ENCODE measurements at regions of chr13 and their contacts with region 1.

Region 1: GRCh38 chr13:28792992-28793391 is 27.1 kb upstream of the MTUS2 start:
- DNase-seq: no peak
- H3K4me3 Mint-ChIP-seq: no peak overlapping the region
- H3K27ac Mint-ChIP-seq: no peak overlapping the region
- H3K4me1 Mint-ChIP-seq: no peaks in the 10 kb centered on the region
- H3K27me3 Mint-ChIP-seq: peaks cover 28% of the 10 kb centered on the region
- CTCF ChIP-seq: no peak

Region 2: DNA sequence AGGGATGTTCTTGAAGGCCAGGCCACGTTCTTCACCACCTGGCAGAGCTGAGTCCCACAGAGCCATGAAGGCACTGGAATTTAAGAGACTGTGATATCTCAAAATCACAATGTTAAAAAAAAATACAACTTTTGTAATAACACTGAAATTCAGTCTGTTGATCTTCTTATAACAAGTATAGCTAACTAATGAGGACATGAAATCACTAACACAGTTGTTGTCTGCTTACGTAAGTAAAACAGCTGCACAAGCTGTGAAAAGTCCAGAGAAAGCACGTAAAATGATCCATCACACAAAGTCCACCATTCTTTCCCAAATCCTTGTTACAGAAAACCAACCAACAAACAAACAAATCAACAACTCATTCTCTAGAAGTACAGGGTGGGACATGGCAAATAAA is 725.5 kb before region 1 on chr13:
- CTCF ChIA-PET with region 1: no interaction called
- POLR2A ChIA-PET with region 1: no interaction called
- intact Hi-C with region 1: loop called (anchors 10 kb)
- DNase-seq: no peak
- H3K4me3 Mint-ChIP-seq: no peak overlapping the region
- H3K27ac Mint-ChIP-seq: no peak overlapping the region
- H3K4me1 Mint-ChIP-seq: no peaks in the 10 kb centered on the region
- H3K27me3 Mint-ChIP-seq: no peaks in the 10 kb centered on the region
- CTCF ChIP-seq: no peak

Region 3: GRCh38 chr13:28324181-28324789 is 468.7 kb before region 1 on chr13:
- CTCF ChIA-PET with region 1: interaction called, 10 read pairs
- POLR2A ChIA-PET with region 1: no interaction called
- intact Hi-C with region 1: loop called (anchors 1 kb)
- DNase-seq: peak; percentile 80
- H3K4me3 Mint-ChIP-seq: no peak overlapping the region
- H3K27ac Mint-ChIP-seq: no peak overlapping the region
- H3K4me1 Mint-ChIP-seq: no peaks in the 10 kb centered on the region
- H3K27me3 Mint-ChIP-seq: no peaks in the 10 kb centered on the region
- CTCF ChIP-seq: peak; percentile 78

Region 4: GRCh38 chr13:28679628-28680027 is 113.4 kb before region 1 on chr13:
- CTCF ChIA-PET with region 1: interaction called, 49 read pairs
- POLR2A ChIA-PET with region 1: no interaction called
- intact Hi-C with region 1: loop called (anchors 1 kb)
- DNase-seq: peak; percentile 27
- H3K4me3 Mint-ChIP-seq: no peak overlapping the region
- H3K27ac Mint-ChIP-seq: no peak overlapping the region
- H3K4me1 Mint-ChIP-seq: no peaks in the 10 kb centered on the region
- H3K27me3 Mint-ChIP-seq: no peaks in the 10 kb centered on the region
- CTCF ChIP-seq: peak; percentile 30

Region 5: DNA sequence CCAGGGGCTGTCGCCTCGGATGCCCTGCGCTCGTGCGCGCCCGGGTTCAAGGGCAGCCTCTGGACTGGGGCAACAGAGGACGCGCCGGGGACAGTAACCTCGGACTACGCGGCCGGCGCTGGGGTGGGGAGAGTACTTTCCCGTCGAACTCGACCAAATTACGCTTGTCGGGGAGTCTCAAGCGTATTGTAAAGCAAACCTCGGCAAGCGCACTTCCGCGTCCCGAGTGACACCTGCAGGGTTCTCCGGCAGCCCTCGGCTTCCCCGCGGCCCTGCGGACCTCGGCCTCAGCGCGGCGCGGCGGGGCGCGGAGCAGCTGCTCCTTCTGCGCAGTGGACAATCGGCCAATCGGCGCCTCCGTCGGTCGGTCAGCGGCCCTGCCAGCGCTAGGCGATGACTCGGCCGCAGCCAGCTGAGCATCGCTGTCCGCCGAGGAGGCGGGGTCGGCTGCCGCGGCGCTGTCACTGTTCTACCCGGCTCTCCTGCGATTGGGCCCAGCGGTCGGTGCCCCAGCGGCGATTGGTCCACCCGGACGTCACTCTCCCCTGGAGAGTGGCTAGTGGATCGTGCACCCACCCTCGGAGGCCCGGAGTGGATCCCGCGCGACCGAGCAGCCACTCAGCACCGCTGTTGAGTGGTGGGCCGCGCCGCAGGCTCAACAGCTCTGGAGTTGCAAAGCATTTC is 74.3 kb before region 1 on chr13 and contains the start of gene SLC46A3:
- CTCF ChIA-PET with region 1: interaction called, 4 read pairs
- POLR2A ChIA-PET with region 1: interaction called, 5 read pairs
- intact Hi-C with region 1: loop called (anchors 2 kb)
- DNase-seq: peak; percentile 96
- H3K4me3 Mint-ChIP-seq: peak within 1 kb of the TSS; percentile 81
- H3K27ac Mint-ChIP-seq: peak within 1 kb of the TSS; percentile 93
- H3K4me1 Mint-ChIP-seq: peaks cover 33% of the 10 kb centered on the region
- H3K27me3 Mint-ChIP-seq: no peaks in the 10 kb centered on the region
- CTCF ChIP-seq: no peak
- total RNA-seq, gene SLC46A3: 6.4 and 8.1 TPM in 2 replicates

Region 6: DNA sequence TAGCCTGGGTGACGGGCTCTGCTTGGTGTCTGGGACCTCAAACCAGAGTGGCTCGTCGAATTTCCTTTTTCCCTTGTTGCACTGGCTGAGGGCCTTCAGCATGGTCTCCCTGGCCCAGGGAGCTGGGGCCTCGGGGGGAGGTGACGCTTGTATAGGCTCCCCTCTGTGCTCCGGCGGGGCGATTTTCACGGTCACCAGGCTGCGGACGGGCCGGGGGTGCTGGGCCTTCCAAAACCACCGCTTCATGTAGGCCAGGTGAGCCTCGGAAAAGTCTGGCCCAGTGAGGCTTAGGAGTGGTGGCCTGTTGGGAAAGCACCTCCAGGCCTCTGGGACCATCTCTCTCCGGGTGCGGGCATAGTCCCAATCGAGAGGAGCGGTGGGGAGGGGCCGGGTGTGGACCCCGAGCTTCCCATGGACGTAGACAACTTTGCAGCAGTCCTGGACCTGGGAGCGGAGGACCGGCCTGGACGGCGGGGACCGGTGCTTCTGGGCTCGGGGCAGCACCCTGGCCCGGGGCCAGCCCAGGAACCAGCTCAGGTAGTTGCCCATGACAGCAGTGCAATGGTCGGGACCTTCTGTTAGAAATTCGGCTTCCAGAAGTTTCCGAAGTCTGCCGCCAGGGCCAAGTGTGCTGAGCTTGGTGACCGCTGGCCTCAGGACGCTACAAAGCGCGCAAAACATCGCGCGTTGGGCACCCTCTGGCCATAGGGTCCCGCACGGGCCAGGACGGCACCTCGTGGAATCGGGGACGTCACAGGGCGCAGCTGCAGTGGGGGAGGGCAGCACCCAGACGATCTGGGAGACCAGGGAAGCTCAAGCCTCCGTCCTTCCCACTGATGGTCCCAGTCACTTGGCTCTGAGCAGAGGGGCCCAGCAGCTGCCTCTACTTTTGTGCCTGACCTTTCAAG is 14.4 kb before region 1 on chr13:
- CTCF ChIA-PET with region 1: no interaction called
- POLR2A ChIA-PET with region 1: no interaction called
- intact Hi-C with region 1: no loop called
- DNase-seq: no peak
- H3K4me3 Mint-ChIP-seq: no peak overlapping the region
- H3K27ac Mint-ChIP-seq: no peak overlapping the region
- H3K4me1 Mint-ChIP-seq: no peaks in the 10 kb centered on the region
- H3K27me3 Mint-ChIP-seq: peaks cover 29% of the 10 kb centered on the region
- CTCF ChIP-seq: no peak

Measured in MCF 10A (cell line).